A549 (cell line): ENCODE measurements at regions of chr10 and their contacts with region 1.

Region 1: DNA sequence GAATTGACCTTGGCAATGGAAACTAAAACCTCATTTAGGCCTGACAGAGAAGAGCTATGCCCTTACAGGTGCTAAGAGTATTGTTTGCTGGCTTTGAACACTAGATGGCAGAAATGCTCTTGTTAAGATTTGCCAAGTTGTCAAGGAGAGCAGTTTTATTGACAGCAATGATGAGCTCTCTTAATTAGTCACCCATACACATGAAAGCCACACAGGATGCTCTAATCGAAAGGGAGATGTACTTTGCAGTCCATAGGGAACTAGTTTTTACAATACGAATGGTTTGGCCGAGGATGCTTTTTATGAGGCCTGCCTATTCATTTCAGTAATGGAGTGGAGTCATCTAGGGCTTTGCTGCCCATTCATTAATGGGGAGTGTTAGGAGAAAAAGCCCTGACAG is 45.4 kb upstream of the MBL2 start:
- DNase-seq: peak in 1 of 2 experiments; percentile 58
- ATAC-seq: peak; percentile 85 to 87
- H3K4me3 ChIP-seq: no peak overlapping the region
- H3K27ac ChIP-seq: no peak overlapping the region
- H3K4me1 ChIP-seq: no peaks in the 10 kb centered on the region
- CTCF ChIP-seq: peak; percentile 51
- EP300 ChIP-seq: no peak
- POLR2A ChIP-seq: no peak
- RAD21 ChIP-seq: peak; percentile 49 to 66; a peak in 4 of 5 replicates

Region 2: DNA sequence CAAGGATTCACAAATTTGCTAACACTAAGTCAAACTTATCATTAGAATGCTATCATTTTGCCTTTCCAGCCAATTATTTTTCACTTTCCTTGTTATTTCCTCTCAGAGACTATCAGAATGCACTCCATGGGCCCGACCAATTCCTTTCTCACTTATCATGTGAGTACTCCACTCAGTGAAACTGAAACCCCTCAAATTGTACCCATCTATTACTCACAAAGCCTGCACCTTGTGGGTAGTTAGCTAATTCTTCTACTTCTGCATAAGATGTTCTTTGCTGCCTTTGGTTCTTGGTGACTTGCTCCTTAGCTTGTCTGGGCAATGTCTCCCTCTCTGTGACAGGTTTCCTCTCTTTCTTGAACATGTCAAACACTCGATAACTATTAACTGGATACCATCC is 10.2 kb before region 1 on chr10:
- CTCF ChIA-PET with region 1: interaction called, 11 read pairs
- POLR2A ChIA-PET with region 1: no interaction called
- DNase-seq: no peak
- ATAC-seq: no peak
- H3K4me3 ChIP-seq: no peak overlapping the region
- H3K27ac ChIP-seq: no peak overlapping the region
- H3K4me1 ChIP-seq: no peaks in the 10 kb centered on the region
- CTCF ChIP-seq: no peak
- EP300 ChIP-seq: no peak
- POLR2A ChIP-seq: no peak
- RAD21 ChIP-seq: no peak